ENCODE measurements at regions of chr7 and their contacts with region 1.

Region 1: GRCh38 chr7:7249814-7250213 is 67.5 kb downstream of the C1GALT1 start:
- DNase-seq: no peak
- ATAC-seq: no peak
- H3K4me3 ChIP-seq: no peak overlapping the region
- H3K4me3 Mint-ChIP-seq: no peak overlapping the region
- H3K27ac ChIP-seq: no peak overlapping the region
- H3K27ac Mint-ChIP-seq: no peak overlapping the region
- H3K4me1 ChIP-seq: peaks cover 3% of the 10 kb centered on the region
- H3K4me1 Mint-ChIP-seq: peaks cover 24% of the 10 kb centered on the region
- H3K27me3 ChIP-seq: no peaks in the 10 kb centered on the region
- H3K27me3 Mint-ChIP-seq: no peaks in the 10 kb centered on the region
- CTCF ChIP-seq: no peak

Region 2: DNA sequence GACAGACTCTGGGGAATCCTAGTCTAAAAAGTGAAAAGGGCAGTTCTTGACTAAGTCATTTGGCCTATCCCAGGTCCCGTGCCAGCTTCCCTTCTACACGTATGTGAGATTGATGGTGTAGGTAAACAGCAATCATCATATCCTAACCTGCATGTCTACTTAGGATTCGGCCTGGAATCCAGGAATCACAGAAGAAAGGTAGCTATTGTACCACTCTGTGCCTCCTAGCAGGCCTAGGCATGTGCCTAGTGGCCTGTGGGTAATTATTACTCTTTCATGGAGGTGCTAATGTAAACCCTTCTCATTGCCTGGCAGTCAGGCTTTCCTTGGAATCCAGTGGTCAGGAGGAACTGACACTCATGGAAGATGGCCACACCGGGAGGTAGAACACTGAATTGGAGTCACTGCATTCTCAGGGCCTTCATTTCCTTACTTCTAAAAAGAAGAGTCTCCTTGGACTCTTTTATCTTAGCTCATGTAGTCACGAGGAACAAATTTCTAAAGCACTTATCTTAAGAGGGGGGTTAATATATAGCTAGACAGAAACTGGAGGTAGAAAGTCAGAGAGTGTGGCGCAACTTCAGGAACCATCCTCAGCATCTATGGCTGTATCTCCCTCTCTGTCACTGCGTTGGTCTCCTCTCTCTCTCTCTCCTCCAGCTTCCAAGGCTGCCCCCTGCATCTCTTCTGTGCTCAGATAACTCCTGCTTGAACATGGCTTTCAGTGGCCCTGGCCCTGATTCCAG is 55.1 kb after region 1 on chr7:
- CTCF ChIA-PET with region 1: no interaction called
- POLR2A ChIA-PET with region 1: no interaction called
- intact Hi-C with region 1: no loop called
- DNase-seq: no peak
- ATAC-seq: no peak
- H3K4me3 ChIP-seq: no peak overlapping the region
- H3K4me3 Mint-ChIP-seq: no peak overlapping the region
- H3K27ac ChIP-seq: no peak overlapping the region
- H3K27ac Mint-ChIP-seq: no peak overlapping the region
- H3K4me1 ChIP-seq: no peaks in the 10 kb centered on the region
- H3K4me1 Mint-ChIP-seq: no peaks in the 10 kb centered on the region
- H3K27me3 ChIP-seq: no peaks in the 10 kb centered on the region
- H3K27me3 Mint-ChIP-seq: peaks cover 2% of the 10 kb centered on the region
- CTCF ChIP-seq: no peak

Region 3: DNA sequence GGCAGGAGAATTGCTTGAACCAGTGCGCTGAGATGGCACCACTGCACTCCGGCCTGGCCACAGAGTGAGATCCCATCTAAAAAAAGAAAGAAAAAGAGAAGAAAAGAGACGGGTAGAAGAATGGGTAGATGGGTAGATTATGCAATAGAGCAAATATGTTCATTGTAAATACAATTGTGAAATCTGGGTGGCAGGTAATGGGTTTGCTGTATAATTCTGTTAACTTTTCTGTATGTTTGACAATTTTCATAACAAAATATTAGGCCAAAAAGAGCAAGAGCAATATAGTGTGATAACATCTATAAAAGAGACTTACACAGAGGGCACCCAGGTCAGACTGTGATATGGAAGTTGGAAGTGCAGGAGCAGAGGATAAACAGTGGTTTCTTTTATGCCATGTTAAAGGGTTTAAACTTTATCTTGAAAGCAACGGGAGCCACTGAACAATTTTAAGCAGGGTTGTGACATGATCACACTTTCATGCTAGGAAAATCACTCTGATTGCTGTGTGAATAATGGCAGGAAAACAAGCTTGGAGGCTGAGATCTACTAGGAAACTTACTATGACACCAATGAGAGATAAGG is 292.5 kb after region 1 on chr7:
- CTCF ChIA-PET with region 1: no interaction called
- POLR2A ChIA-PET with region 1: no interaction called
- intact Hi-C with region 1: loop called in 1 of 2 experiments (anchors 5 kb)
- DNase-seq: no peak
- ATAC-seq: no peak
- H3K4me3 ChIP-seq: no peak overlapping the region
- H3K4me3 Mint-ChIP-seq: no peak overlapping the region
- H3K27ac ChIP-seq: no peak overlapping the region
- H3K27ac Mint-ChIP-seq: no peak overlapping the region
- H3K4me1 ChIP-seq: no peaks in the 10 kb centered on the region
- H3K4me1 Mint-ChIP-seq: peaks cover 2% of the 10 kb centered on the region
- H3K27me3 ChIP-seq: no peaks in the 10 kb centered on the region
- H3K27me3 Mint-ChIP-seq: peaks cover 2% of the 10 kb centered on the region
- CTCF ChIP-seq: no peak

Measured in CD8-positive, alpha-beta T cell (primary cell).